Dorsolateral prefrontal cortex (tissue), 120 donors: ENCODE measurements at regions of chr17 and their contacts with region 1.

Region 1: DNA sequence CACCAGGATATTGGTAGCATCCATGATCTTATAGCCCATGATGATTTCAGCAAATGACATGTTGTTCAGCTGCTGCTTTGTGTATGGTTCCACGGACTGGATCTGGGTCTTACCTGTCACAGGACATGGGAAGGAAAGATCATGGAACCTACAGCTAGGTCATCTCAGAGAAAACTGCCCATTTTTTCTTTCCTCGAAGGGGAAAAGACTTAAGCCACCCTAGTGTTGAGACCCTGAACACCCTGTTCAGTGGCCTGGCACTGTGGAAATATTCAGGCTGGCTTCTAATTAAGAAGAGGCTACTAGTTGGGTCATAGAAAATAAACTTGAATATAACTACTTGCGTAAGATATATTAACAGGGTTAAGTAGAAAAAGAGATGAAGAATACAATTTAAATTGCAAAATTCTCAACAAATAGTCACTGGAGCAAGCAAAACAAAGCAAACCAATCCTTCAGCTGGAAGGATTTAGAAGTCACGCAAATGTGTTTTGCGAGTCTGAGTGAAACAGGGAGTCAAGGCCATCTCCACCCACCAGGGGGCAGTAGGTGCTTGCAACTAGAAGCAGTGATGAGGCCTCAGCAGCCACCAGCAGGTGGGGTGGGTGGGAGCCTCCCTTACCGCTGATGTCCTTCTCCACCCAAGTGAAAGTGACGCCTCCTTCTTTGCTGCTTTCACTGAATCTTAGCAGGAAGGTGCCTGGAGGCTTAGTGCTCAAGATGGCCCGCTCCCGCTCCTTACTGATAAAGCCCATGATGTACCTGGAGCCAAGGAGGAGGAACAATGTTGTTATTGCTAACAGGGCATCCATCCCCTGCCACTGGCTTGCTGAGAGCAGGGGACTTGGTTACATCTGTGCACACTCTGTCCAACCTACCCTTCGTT is 34.3 kb downstream of the STAT5A start:
- DNase-seq: peak; percentile 88 to 98 (median 94)
- H3K4me3 ChIP-seq: peak overlapping the region in 1 of 59 donors; percentile 17
- H3K27ac ChIP-seq: peak overlapping the region in 40 of 59 donors; percentile 0 to 79 (median 38)
- H3K27me3 ChIP-seq: no peaks in the 10 kb centered on the region
- CTCF ChIP-seq: peak; percentile 95 to 100 (median 100)

Region 2: DNA sequence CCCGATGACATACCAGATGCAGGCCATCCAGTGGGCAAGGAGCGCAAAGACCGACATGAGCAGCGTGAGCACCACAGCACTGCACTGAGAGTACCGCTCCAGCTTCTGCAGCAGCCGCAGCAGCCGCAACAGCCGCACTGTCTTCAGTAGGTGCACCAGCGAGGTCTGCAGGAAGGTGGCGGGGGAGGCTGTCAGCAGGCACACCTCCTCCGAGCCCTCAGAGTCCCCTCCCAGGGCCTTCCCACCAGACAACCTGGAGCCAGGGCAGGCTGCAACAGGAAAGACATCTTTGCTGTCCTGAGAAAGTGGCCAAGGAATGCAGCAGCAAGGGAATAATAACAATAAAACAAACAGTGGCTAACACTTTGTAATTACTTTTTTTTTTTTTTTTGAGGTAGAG is 150.8 kb before region 1 on chr17:
- intact Hi-C with region 1: no loop called
- DNase-seq: no peak
- H3K4me3 ChIP-seq: no peak overlapping the region
- H3K27ac ChIP-seq: peak overlapping the region in 1 of 59 donors; percentile 25
- H3K27me3 ChIP-seq: no peaks in the 10 kb centered on the region
- CTCF ChIP-seq: no peak

Region 3: DNA sequence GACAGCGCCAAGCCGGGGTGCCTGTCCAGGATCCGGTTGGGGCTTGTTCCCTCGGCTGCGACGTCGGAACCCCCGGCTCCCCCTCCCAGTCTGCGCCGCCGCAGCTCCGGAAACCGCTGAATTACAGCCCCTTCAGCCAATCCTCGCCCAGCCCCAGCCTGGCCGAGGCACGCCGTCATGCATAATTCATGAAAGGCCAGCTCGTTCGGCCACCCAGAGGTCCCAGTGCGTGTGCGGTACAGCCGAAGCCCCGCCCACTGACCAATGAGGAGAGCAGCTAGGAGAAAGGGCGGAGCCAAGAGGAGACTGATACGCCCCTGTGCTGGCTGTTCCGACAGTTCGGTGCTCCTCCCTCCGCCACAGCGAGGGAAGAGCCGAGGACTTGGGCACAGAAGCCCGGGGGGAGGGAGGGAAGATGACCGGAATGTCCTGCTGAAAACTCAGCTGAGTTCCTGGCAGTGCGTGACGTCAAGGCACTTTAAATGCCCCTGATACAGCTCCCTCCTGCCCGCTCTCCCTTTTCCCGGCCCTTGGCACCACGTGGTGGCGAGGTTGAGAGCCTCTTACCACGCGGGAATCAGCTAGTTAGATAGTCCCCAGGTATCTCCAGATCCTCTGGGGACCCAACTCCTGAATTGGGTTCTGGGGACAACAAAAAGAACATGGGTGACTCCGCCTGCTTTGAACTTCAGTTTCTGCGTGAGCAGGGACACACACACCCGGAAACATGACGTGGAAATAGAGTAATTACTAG is 65.9 kb after region 1 on chr17 and contains the start of gene STAT3:
- intact Hi-C with region 1: loop called (anchors 5 kb)
- DNase-seq: peak; percentile 100
- H3K4me3 ChIP-seq: peak within 1 kb of the TSS; percentile 77 to 100 (median 95)
- H3K27ac ChIP-seq: peak within 1 kb of the TSS; percentile 70 to 100 (median 98)
- H3K27me3 ChIP-seq: no peaks in the 10 kb centered on the region
- CTCF ChIP-seq: peak in 33 of 56 donors; percentile 4 to 61 (median 28)
- total RNA-seq, gene STAT3: 57.7 to 203 (median 98.0) TPM

Region 4: DNA sequence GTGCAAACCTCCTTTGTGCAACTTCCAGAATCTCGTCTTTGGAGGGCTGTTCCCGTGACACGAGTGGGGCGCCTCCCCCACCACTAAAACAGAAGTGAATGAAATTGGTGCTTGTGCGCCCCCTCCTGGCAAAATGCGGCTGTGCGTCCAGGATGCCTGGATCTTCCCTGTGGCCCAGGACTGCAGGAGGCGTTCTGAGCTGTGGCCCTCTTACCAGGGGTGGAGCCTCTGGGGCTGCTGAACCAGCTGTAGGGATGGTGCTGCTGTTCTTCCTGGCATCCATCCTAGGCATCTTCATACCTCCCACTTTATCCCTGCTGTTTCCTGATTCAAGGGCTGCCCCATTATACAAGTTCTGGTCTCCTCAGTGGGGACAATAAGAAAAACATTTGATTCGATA is 194.9 kb after region 1 on chr17:
- intact Hi-C with region 1: loop called (anchors 5 to 10 kb)
- DNase-seq: peak; percentile 62 to 91 (median 81)
- H3K4me3 ChIP-seq: peak overlapping the region in 1 of 59 donors; percentile 9
- H3K27ac ChIP-seq: peak overlapping the region in 58 of 59 donors; percentile 52 to 98 (median 90)
- H3K27me3 ChIP-seq: no peaks in the 10 kb centered on the region
- CTCF ChIP-seq: peak; percentile 57 to 96 (median 88)